GM23248 (cell line): ENCODE measurements at regions of chr14 and their contacts with region 1.

Region 1: DNA sequence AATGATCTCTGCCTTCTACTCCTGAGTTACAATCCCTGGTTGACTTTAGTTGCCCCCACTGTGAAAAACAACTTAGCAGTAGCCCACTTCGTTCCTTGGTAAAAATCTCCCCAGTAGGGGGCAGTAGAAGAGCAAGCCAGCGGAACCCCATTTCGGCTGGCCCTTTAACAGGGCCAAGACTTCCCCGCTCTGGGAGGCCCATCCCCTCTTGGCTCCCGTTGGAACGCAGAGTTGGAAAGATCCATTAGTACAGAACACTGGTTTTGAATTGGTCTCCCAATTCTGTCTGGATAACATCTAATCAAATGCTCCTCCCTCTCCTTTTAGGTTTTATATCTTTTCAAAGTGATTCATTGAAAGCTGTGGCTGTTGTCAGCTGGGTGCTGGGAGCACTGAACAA is 1133.3 kb downstream of the BCL11B start:
- DNase-seq: peak; percentile 47
- H3K4me3 ChIP-seq: no peak overlapping the region
- H3K27ac ChIP-seq: no peak overlapping the region
- H3K4me1 ChIP-seq: no peaks in the 10 kb centered on the region
- H3K27me3 ChIP-seq: no peaks in the 10 kb centered on the region

Region 2: GRCh38 chr14:97771340-97772045 is 367.2 kb before region 1 on chr14:
- in situ Hi-C with region 1: no loop called
- DNase-seq: no peak
- H3K4me3 ChIP-seq: no peak overlapping the region
- H3K27ac ChIP-seq: no peak overlapping the region
- H3K4me1 ChIP-seq: no peaks in the 10 kb centered on the region
- H3K27me3 ChIP-seq: no peaks in the 10 kb centered on the region

Region 3: DNA sequence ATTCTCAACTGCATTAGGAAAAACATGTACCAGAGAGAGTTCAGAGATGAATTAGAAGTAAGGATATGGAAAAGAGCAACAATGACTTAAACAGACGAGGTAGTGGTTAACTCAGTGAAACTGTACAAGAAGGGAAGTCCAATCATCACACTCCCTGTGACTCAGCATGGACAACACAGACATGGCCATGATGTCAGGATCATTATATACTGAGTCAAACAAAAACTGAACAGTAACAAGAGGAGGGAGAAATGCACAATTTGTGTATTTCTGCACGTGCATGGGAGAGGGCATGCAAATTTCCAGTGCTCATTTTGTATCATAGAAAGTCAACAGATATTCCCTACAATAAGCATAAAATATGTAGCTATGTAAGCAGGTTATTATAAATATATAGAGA is 95.5 kb after region 1 on chr14:
- in situ Hi-C with region 1: no loop called
- DNase-seq: peak; percentile 14
- H3K4me3 ChIP-seq: no peak overlapping the region
- H3K27ac ChIP-seq: no peak overlapping the region
- H3K4me1 ChIP-seq: no peaks in the 10 kb centered on the region
- H3K27me3 ChIP-seq: no peaks in the 10 kb centered on the region

Region 4: DNA sequence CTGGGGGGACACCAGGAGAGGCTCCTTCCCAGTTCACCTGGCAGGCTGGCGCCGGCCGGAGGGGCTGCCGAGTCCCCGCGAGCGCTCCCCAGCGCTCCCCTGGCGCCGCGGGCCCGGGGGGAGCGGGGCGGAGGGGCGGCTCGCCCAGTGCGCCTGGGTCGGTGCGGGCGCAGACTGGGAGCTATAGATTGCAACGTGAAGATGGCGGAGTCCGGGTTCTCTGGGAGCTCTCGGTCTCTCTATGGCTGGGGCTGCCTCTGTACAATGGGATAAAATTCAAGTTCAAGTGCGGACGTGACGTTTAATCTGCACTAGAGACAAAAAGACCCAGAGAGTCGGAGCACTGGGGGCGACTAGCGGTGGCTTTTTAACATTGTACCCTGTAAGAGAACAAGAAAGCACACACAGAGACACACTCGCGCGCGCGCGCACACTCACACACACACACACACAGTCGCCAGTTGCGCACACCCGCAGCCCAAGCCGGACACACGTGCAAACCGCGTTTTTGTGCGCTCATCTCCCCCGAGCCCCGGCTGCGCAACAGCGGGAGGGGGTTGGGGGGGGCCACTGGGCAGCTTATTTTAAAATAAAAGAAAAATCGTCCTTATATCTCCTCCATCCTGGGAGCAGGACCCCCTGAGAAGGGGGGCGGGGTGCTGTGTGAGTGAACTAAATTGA is 1133.4 kb after region 1 on chr14 and contains the start of gene BCL11B:
- in situ Hi-C with region 1: loop called (anchors 25 kb)
- DNase-seq: peak; percentile 76
- H3K4me3 ChIP-seq: peak within 1 kb of the TSS; percentile 70
- H3K27ac ChIP-seq: no peak within 1 kb of the TSS
- H3K4me1 ChIP-seq: peaks cover 13% of the 10 kb centered on the region; the same call in 1 of the 2 replicates
- H3K27me3 ChIP-seq: peaks cover 84% of the 10 kb centered on the region
- total RNA-seq, gene BCL11B: not detected in 2 replicates